ENCODE measurements at regions of chr1 and their contacts with region 1.

Region 1: DNA sequence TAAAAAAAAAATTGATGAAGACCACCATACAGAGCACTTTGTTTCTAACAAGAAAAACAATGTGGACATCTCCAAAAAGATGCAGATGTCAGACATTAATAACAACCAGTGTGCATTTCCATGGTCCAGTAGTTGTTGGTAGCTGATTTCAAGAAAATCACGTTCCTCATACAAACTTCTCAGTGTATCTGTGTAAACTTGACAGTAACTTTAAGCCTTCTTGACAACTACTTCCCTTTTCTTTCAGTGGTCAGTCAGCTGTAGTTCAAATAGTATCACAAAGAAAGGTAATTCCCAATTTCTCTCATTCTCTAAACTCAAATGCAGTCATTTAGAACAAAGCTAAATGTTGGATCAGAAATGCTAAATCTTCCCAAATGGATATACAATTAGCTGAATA is 879.9 kb downstream of the AMY1C start:
- DNase-seq: no peak
- H3K4me3 ChIP-seq: no peak overlapping the region
- H3K27ac ChIP-seq: no peak overlapping the region
- H3K4me1 ChIP-seq: no peaks in the 10 kb centered on the region
- H3K27me3 ChIP-seq: no peaks in the 10 kb centered on the region
- CTCF ChIP-seq: no peak
- POLR2A ChIP-seq: no peak

Region 2: DNA sequence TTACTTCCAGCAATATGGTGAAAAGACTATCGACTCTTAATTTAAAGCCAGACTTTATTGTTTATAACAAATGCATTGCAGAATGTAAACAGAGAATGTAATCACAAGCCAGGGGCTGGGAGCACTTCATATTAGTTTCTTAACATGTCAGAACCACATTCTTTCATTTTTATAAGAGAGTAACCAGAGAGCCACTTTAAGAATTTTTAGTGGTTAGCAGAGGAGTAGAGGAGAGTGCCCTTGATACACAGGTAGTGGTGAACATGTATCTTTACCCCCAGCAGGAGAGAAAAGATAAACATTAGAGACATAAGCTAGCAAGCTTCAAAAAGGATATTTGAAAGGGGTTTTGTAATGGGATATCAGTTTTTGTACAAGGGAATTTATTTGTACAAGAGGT is 1047.1 kb before region 1 on chr1:
- intact Hi-C with region 1: loop called (anchors 10 kb)
- DNase-seq: no peak
- H3K4me3 ChIP-seq: no peak overlapping the region
- H3K27ac ChIP-seq: no peak overlapping the region
- H3K4me1 ChIP-seq: no peaks in the 10 kb centered on the region
- H3K27me3 ChIP-seq: no peaks in the 10 kb centered on the region
- CTCF ChIP-seq: no peak
- POLR2A ChIP-seq: no peak

Region 3: DNA sequence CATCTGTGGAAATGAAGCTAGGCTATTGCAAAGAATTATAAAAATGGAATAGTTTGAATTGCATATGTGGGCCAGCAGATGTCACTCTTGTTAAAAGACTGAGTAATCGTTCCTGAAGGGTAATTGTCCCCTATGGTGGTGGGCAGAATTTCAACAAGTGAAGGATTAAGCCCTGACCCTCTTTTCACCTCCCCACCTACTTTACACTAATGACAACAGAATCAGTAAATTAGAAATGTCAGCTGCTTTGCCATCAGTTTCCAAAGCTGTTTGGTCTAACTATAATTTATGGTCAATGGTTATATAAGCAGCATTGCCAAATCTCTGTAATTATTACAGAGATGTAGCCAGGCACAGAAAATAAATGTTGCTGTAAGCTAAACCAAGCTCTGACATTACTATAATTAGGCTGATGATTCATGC is 18.7 kb after region 1 on chr1:
- intact Hi-C with region 1: no loop called
- DNase-seq: no peak
- H3K4me3 ChIP-seq: no peak overlapping the region
- H3K27ac ChIP-seq: no peak overlapping the region
- H3K4me1 ChIP-seq: no peaks in the 10 kb centered on the region
- H3K27me3 ChIP-seq: no peaks in the 10 kb centered on the region
- CTCF ChIP-seq: no peak
- POLR2A ChIP-seq: no peak

Measured in breast epithelium (tissue), 4 donors.